GM18951 (cell line): ENCODE measurements at regions of chr1 and their contacts with region 1.

Region 1: GRCh38 chr1:155084722-155085503 is 6.3 kb downstream of the EFNA3 start:
- POLR2A ChIP-seq: peak; percentile 58

Region 2: DNA sequence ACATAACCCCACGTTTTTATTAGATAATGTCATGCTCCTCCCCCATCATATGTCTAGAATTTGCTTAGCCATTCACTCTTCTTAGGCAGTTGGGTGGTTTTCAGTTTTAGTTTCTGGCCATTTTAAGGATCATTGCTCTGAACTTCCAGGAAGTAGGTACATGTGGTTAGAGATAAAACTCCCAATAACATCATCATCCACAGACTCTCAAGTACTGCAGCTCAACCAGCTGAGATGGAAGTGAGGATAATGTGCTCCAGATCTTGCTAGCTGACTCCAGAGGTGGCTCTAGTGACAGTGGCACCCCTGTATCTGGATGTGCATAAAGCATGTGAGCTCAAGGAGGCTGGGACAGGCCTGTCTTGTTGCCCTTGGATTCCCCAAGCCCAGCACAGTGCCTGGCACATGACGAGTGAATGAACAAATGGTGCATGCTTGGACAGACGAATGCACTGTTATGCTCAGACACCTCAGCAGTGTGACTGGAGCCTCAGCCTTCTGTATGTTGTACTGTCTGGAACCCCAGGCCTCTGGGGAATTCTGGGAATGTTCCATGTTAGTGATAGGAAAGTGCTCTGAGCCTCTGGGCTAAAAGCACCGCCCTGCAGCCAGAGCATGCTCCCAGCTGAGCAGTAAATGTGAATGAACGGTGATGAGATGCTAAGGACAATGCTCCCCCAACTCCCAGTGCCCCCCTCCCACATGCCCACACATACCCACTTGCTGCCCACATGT is 198.5 kb before region 1 on chr1:
- in situ Hi-C with region 1: no loop called
- POLR2A ChIP-seq: no peak

Region 3: GRCh38 chr1:155172732-155173477 is 88.0 kb after region 1 on chr1 and contains the start of gene KRTCAP2:
- in situ Hi-C with region 1: loop called (anchors 5 kb)
- POLR2A ChIP-seq: peak; percentile 93